Heart left ventricle (tissue), 16 donors: ENCODE measurements at regions of chr5 and their contacts with region 1.

Region 1: GRCh38 chr5:108642167-108642906 is 105.4 kb upstream of the FER start:
- DNase-seq: peak in 4 of 5 donors; percentile 55 to 62 (median 60)
- ATAC-seq: peak; percentile 83 to 96 (median 93)
- H3K4me3 ChIP-seq: peak overlapping the region in 1 of 12 donors; percentile 11
- H3K27ac ChIP-seq: peak overlapping the region in 5 of 12 donors; percentile 1 to 70 (median 42)
- H3K4me1 ChIP-seq: peaks cover 0 to 8% (median 0%) of the 10 kb centered on the region in 12 donors
- H3K27me3 ChIP-seq: no peaks in the 10 kb centered on the region
- CTCF ChIP-seq: peak; percentile 67 to 91 (median 78)
- POLR2A ChIP-seq: no peak

Region 2: DNA sequence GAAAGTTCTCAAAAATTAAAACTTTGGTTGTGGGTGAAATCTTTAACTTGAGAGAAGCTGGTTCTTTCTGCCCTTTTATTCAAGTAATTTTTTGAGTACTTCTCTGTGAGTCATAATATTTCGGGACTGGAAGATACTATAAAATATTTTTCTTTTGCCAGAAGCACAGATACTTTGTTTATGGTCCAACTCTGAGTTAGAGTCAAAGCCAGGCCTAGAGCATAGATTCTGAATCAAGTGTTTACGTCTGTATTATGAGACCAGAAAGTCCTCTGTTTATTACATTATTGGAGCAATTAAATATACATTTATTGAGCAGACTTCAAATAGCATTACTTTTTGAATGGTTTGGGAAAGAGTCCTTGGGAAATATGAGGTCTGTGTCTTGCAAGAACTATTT is 293.3 kb after region 1 on chr5:
- intact Hi-C with region 1: no loop called
- DNase-seq: no peak
- ATAC-seq: no peak
- H3K4me3 ChIP-seq: no peak overlapping the region
- H3K27ac ChIP-seq: no peak overlapping the region
- H3K4me1 ChIP-seq: peaks cover 0 to 5% (median 0%) of the 10 kb centered on the region in 12 donors
- H3K27me3 ChIP-seq: no peaks in the 10 kb centered on the region
- CTCF ChIP-seq: no peak
- POLR2A ChIP-seq: no peak

Region 3: GRCh38 chr5:109479260-109479860 is 837.0 kb after region 1 on chr5:
- intact Hi-C with region 1: loop called in 2 of 10 experiments (anchors 10 kb)
- DNase-seq: no peak
- ATAC-seq: no peak
- H3K4me3 ChIP-seq: no peak overlapping the region
- H3K27ac ChIP-seq: no peak overlapping the region
- H3K4me1 ChIP-seq: peaks cover 0 to 16% (median 0%) of the 10 kb centered on the region in 12 donors
- H3K27me3 ChIP-seq: no peaks in the 10 kb centered on the region
- CTCF ChIP-seq: peak in 9 of 12 donors; percentile 9 to 55 (median 33)
- POLR2A ChIP-seq: no peak